Activated CD4-positive, alpha-beta T cell treated with anti-CD3 and anti-CD28 coated beads for 36 hours (primary cell): ENCODE measurements at regions of chr17 and their contacts with region 1.

Region 1: DNA sequence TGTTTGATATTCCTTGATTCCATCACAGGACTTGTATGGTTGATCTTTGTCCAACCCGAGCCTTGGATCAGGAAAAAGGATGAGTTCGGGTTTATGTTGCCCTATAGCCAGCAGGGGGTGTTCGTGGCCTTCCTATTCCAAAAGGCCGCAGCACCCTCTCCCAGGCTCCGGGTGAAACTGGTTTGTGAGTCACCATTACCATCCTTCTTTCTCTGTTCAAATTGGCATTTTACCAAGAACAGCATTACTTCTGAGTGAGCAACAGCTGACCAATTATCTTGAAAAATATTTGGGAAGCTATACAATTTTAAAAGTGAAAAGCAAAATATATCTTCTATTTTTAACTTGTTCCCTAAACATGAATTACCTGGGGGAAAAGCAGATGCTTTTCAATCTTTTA is 24.3 kb upstream of the KRT20 start:
- DNase-seq: peak; percentile 79
- ATAC-seq: peak; percentile 94
- H3K4me3 Mint-ChIP-seq: no peak overlapping the region
- H3K27ac Mint-ChIP-seq: no peak overlapping the region
- H3K4me1 Mint-ChIP-seq: no peaks in the 10 kb centered on the region
- H3K27me3 Mint-ChIP-seq: peaks cover 31% of the 10 kb centered on the region

Region 2: GRCh38 chr17:40803617-40804082 is 105.7 kb before region 1 on chr17:
- CTCF ChIA-PET with region 1: no interaction called
- POLR2A ChIA-PET with region 1: no interaction called
- intact Hi-C with region 1: loop called (anchors 5 to 10 kb)
- DNase-seq: peak; percentile 89
- ATAC-seq: peak; percentile 93
- H3K4me3 Mint-ChIP-seq: no peak overlapping the region
- H3K27ac Mint-ChIP-seq: no peak overlapping the region
- H3K4me1 Mint-ChIP-seq: peaks cover 2% of the 10 kb centered on the region
- H3K27me3 Mint-ChIP-seq: peaks cover 30% of the 10 kb centered on the region

Region 3: DNA sequence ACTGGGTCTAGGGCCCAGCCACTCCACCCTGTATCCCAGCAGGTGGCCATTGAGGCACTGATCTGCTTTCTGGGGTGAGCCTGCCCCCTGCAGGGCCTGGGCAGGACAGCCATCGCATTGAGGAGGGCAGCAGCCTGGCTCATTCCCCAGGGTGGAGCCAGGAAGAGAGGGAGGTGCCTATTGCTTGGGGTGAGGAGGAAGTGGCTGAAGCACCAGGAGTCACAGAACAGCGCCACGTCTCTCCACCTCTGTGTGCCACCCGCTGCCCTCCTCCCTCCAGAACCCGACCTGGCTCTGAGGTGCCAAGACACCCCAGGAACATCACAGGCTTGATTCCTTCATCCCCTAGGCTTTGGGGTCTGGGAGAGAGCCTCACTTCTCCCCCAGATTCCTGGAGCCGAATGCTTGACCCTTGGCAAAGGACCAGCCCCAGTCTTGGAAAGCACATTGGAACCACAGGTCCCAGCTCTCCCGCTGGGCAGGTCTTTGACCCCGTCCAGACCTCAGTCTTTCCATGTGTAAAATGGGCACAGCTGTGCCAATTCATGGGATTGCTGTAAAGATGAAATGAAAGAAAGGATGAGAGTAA is 587.6 kb after region 1 on chr17:
- CTCF ChIA-PET with region 1: interaction called, 5 read pairs
- POLR2A ChIA-PET with region 1: no interaction called
- intact Hi-C with region 1: loop called (anchors 1 to 5 kb)
- DNase-seq: peak; percentile 87
- ATAC-seq: peak; percentile 100
- H3K4me3 Mint-ChIP-seq: no peak overlapping the region
- H3K27ac Mint-ChIP-seq: peak overlapping the region; percentile 10
- H3K4me1 Mint-ChIP-seq: peaks cover 10% of the 10 kb centered on the region
- H3K27me3 Mint-ChIP-seq: no peaks in the 10 kb centered on the region